Left ventricle myocardium superior (tissue), 1 donor: ENCODE measurements at regions of chr14 and their contacts with region 1.

Region 1: DNA sequence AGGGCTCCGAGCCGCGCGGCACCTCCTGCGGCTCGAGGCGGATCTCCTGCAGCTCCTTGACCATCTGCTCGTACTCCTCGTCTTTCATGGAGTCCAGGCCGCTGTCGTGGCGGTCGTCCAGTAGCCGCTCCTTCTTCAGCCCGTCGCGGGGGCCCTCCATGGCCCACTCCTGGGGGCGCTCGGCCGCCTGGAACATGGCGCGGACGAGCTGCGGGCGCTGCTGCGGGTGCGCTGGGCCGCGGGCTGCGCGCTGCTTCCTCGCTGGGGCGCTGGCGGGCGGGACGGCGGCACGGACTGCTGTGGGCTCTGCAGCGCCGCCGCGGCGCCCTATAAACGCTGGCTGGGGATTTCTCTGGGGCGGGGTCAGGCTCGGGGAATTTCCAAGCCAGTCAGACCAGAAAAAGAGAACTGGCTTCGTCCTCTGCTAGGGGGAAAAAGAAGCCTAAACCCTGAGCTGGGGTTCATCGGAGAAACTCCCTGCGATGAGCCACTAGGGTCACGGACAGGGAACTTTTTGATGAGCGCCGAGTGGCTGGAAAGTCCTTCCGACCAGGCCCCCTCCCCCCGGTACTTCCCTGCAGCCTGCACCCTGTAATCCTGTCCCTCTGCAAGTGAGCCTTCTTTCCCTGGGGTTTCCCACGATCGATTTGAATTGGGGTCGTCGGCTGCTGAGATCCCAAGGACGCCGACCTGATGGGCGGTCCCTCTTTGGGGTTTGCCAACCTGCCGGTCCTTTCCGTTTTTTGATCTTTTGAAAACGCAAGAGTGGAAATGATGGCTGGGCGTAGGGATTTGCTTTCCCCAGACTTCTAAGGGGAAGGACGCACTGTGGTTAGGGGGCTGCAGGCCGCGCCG is at the start of gene NFKBIA:
- DNase-seq: peak; percentile 96
- ATAC-seq: peak; percentile 73
- total RNA-seq, gene NFKBIA: 96.4 TPM

Region 2: DNA sequence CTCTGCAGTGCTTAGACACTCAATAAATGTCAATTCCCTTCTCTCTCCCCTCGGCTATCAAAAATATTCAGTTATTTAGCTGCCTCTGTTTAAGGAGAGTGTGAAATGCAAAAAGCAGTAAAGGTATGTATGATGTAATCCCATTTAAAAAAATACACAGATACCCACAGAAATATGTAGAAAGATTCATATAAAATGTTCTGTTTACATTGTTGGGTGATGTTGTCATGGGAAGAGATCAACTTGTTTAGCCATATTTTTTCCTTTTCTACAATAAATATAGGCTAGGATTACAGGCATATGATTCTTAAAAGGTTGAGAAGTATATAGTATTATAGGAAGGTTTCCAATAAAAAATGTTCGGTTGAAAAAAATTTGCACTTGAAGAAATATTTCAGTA is 290.6 kb before region 1 on chr14:
- intact Hi-C with region 1: no loop called
- DNase-seq: no peak
- ATAC-seq: no peak

Region 3: GRCh38 chr14:35229495-35230089 is 175.1 kb before region 1 on chr14:
- intact Hi-C with region 1: loop called (anchors 5 kb)
- DNase-seq: no peak
- ATAC-seq: no peak

Region 4: GRCh38 chr14:35301735-35302528 is 102.7 kb before region 1 on chr14:
- intact Hi-C with region 1: loop called (anchors 10 kb)
- DNase-seq: no peak
- ATAC-seq: no peak

Region 5: GRCh38 chr14:35553808-35554207 is 149.1 kb after region 1 on chr14:
- intact Hi-C with region 1: no loop called
- DNase-seq: no peak
- ATAC-seq: no peak

Region 6: DNA sequence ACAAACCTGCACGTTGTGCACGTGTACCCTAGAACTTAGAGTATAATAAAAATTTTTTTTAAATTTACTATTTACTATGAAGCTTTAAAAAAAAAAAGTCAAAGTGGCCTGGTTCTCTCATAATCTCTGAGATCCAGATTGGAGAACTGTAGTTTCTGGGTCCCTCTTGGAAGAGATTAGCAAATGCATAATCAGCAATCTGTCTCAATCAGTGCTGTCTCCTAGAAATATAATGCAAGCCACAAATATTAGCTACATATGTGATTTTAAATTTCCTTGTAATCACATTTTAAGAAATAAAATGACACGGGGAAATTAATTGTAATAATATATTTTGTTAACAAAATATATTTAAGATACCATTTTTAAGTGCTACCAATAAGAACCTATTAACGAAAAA is 372.1 kb after region 1 on chr14:
- intact Hi-C with region 1: no loop called
- DNase-seq: no peak
- ATAC-seq: no peak